ENCODE measurements at regions of chr4 and their contacts with region 1.

Region 1: DNA sequence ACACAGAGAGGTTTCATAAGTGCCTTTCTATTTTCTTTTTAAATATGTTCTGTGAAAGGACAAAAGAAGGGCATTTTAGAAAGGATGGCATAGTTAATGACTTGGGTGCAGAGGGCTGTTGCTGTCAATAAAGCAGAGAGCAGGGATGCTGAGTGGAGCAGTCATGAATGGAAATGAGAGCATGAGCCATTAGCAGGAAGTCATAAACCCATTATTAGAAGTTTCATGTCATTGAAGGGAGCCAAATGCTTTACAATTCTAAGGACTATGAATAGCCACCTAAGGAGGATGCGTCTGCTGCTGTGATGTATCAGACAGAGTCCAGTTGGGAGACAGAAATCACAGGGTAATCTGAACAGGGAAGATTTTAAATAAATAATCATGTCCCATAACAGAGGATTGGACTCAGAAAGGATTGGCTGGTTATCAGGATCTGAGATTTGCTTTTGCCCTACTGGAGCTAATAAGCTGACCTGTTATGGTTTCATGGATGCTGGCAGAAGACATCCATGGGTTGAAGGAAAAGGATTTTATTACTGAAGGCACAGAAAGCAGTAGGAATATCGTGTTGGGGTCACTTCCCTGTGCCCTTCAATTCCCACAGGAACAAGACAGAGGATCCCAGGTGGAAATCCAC is 47.5 kb upstream of the WDR19 start:
- DNase-seq: no peak

Region 2: GRCh38 chr4:38769857-38770256 is 364.9 kb before region 1 on chr4:
- intact Hi-C with region 1: loop called (anchors 10 kb)
- DNase-seq: no peak

Region 3: GRCh38 chr4:38902695-38903094 is 232.1 kb before region 1 on chr4:
- intact Hi-C with region 1: loop called (anchors 1 kb)
- DNase-seq: no peak

Region 4: GRCh38 chr4:39044364-39044955 is 90.3 kb before region 1 on chr4:
- intact Hi-C with region 1: loop called (anchors 5 kb)
- DNase-seq: peak; percentile 73 to 96 (median 82)

Region 5: DNA sequence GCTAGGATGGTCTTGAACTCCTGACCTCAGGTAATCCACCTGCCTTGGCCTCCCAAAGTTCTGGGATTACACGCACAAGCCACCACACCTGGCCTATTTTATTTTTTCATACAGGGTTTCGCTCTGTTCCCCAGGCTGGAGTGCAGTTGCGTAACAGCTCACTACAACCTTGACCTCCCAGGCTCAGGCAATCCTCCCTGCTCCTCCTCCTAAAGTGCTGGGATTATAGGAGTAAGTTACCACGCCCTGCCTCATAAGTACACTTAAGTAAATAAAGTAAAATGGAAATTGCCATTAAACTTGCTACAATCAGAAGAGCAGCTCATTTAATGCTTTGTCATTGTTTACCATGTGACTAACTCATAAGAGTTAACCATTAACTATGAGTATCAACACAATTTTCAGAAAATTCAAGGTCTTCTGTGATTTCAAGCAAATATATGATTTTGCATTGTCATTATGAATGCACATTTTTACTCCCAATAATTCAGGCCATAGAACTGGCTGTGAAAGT is 380.1 kb after region 1 on chr4:
- intact Hi-C with region 1: no loop called
- DNase-seq: no peak

Measured in posterior cingulate gyrus (tissue), 11 donors.